ENCODE measurements at regions of chr5 and their contacts with region 1.

Region 1: DNA sequence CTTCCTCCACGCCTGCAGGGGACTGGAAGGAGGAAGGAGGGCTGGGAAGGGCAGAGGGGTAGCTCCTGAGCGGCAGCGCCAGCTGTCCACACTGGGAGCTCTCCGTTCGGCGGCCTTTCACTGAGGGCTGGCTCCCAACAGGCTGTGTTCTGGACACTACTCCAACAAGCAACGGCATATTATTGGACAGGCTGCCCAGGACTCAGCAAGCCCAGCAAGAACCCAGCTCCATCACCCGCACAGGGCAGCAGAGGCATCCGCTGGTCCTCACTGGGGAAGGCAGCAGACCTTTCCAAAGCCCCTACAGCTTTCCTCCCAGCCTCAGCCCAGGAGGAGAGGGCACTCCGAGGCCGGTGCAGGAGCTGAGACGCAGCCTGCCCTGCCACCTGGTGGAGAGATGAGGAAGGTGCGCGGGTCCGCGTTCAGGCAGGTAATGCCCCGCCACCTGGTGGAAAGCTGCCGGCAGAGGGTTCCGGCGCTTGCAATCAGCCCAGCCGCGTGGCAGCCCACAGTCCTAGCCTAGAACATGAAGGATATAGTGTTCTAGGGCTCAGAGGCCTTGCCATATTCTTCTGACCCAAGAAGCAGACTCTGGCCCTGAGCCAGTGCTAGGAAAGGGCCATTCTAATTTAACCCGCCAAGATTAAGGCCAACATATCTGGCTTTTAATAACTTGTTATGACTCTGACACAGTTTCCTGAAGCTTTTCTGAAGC is 74.4 kb downstream of the NRG2 start:
- DNase-seq: peak; percentile 77 to 82 (median 79)
- H3K4me3 ChIP-seq: no peak overlapping the region
- H3K4me3 Mint-ChIP-seq: no peak overlapping the region
- H3K27ac ChIP-seq: no peak overlapping the region
- H3K27ac Mint-ChIP-seq: peak overlapping the region in 1 of 7 donors; percentile 47
- H3K4me1 ChIP-seq: no peaks in the 10 kb centered on the region
- H3K4me1 Mint-ChIP-seq: no peaks in the 10 kb centered on the region
- H3K27me3 ChIP-seq: no peaks in the 10 kb centered on the region
- H3K27me3 Mint-ChIP-seq: peaks cover 5 to 11% of the 10 kb centered on the region in 2 donors

Region 2: DNA sequence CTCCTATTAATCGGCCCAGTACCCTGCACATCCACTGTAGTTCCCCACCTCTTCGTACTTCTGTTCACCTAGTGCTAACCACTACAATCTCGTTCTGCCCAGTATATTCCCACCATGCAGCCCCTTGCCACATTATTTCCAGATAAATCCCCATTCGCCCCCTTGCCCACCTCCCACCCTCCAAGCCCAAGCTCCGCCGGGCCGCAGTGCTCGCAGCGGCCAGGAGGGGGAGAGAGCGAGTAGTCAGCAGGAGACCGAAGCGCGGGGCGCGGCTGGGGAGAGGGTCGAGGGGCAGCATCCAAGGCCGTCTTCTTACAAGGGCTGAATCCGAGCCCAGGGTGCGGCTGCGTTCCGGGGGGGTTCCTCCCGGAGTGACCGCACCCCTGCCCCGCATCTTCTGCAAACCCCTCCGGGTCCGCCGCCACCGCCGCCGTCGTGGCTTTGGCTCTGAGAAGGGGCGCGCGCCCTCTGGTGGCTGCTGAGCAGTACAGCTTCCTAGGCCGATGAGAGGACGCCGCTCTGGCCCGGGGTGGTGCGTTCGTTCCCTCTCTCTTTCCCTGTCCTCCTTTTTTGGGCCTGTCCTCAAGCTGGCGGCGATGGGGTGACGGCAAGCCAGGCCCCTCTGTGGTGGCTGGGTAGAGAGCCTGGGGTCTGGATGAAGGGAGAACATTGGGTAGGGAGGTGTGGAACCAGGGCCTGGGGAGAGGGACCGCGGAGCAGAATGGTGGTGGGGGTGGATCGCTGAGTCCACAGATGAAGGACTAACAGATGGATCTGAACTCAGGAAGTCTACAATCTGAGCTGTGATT is 203.1 kb before region 1 on chr5:
- CTCF ChIA-PET with region 1: interaction called, 15 read pairs
- POLR2A ChIA-PET with region 1: interaction called, 3 read pairs
- intact Hi-C with region 1: no loop called
- DNase-seq: peak; percentile 78 to 87 (median 84)
- H3K4me3 ChIP-seq: peak overlapping the region; percentile 23 to 56
- H3K4me3 Mint-ChIP-seq: peak overlapping the region; percentile 25 to 72 (median 54)
- H3K27ac ChIP-seq: no peak overlapping the region
- H3K27ac Mint-ChIP-seq: peak overlapping the region in 5 of 7 donors; percentile 31 to 66 (median 52)
- H3K4me1 ChIP-seq: peaks cover 9% of the 10 kb centered on the region
- H3K4me1 Mint-ChIP-seq: peaks cover 5 to 8% (median 7%) of the 10 kb centered on the region in 4 donors
- H3K27me3 ChIP-seq: peaks cover 19% of the 10 kb centered on the region
- H3K27me3 Mint-ChIP-seq: peaks cover 19 to 33% of the 10 kb centered on the region in 2 donors

Region 3: GRCh38 chr5:139787568-139788293 is 181.0 kb before region 1 on chr5:
- CTCF ChIA-PET with region 1: interaction called, 147 read pairs
- POLR2A ChIA-PET with region 1: interaction called, 5 read pairs
- intact Hi-C with region 1: loop called (anchors 1 kb)
- DNase-seq: peak; percentile 66 to 86 (median 80)
- H3K4me3 ChIP-seq: peak overlapping the region; percentile 73 to 87
- H3K4me3 Mint-ChIP-seq: peak overlapping the region; percentile 80 to 90 (median 88)
- H3K27ac ChIP-seq: no peak overlapping the region
- H3K27ac Mint-ChIP-seq: peak overlapping the region in 4 of 7 donors; percentile 12 to 71 (median 41)
- H3K4me1 ChIP-seq: peaks cover 10% of the 10 kb centered on the region
- H3K4me1 Mint-ChIP-seq: peaks cover 0 to 14% (median 5%) of the 10 kb centered on the region in 4 donors
- H3K27me3 ChIP-seq: no peaks in the 10 kb centered on the region
- H3K27me3 Mint-ChIP-seq: peaks cover 16 to 17% of the 10 kb centered on the region in 2 donors

Region 4: GRCh38 chr5:139949710-139950109 is 19.0 kb before region 1 on chr5:
- CTCF ChIA-PET with region 1: interaction called, 43 read pairs
- POLR2A ChIA-PET with region 1: interaction called, 3 read pairs
- intact Hi-C with region 1: no loop called
- DNase-seq: no peak
- H3K4me3 ChIP-seq: no peak overlapping the region
- H3K4me3 Mint-ChIP-seq: no peak overlapping the region
- H3K27ac ChIP-seq: no peak overlapping the region
- H3K27ac Mint-ChIP-seq: no peak overlapping the region
- H3K4me1 ChIP-seq: no peaks in the 10 kb centered on the region
- H3K4me1 Mint-ChIP-seq: peaks cover 0 to 3% (median 0%) of the 10 kb centered on the region in 4 donors
- H3K27me3 ChIP-seq: peaks cover 3% of the 10 kb centered on the region
- H3K27me3 Mint-ChIP-seq: peaks cover 26 to 41% of the 10 kb centered on the region in 2 donors

Region 5: DNA sequence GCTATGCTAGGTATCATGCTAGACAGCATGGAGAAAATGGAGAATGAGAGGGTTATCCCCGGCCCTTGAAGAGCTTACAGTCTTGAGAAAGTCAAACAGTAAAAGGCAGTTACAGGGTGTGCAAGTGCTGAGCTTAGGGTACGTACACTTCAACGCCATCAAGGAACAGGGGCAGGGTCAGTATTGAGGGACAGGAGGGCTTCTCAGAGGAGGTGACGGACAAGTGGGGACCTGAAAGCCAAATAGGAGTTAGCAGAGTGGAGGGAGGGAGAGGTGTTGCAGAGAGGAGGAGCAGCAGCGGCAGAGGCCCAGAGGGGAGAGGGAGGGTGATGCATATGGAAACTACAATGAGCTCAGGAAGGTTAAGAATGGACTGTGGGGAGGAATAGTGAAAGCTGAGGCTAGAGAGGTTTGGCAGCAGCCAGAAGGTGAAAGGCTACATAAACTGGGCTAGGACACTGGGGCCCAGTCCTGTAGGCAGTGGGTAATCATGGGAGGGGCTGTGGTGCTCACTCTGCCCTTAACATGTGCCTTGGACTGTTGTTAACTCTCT is 13.6 kb before region 1 on chr5:
- CTCF ChIA-PET with region 1: interaction called, 43 read pairs
- POLR2A ChIA-PET with region 1: no interaction called
- intact Hi-C with region 1: no loop called
- DNase-seq: no peak
- H3K4me3 ChIP-seq: no peak overlapping the region
- H3K4me3 Mint-ChIP-seq: no peak overlapping the region
- H3K27ac ChIP-seq: no peak overlapping the region
- H3K27ac Mint-ChIP-seq: no peak overlapping the region
- H3K4me1 ChIP-seq: no peaks in the 10 kb centered on the region
- H3K4me1 Mint-ChIP-seq: peaks cover 0 to 3% (median 0%) of the 10 kb centered on the region in 4 donors
- H3K27me3 ChIP-seq: no peaks in the 10 kb centered on the region
- H3K27me3 Mint-ChIP-seq: peaks cover 11 to 15% of the 10 kb centered on the region in 2 donors

Region 6: GRCh38 chr5:139985733-139986132 is 17.0 kb after region 1 on chr5:
- CTCF ChIA-PET with region 1: interaction called, 76 read pairs
- POLR2A ChIA-PET with region 1: no interaction called
- intact Hi-C with region 1: no loop called
- DNase-seq: no peak
- H3K4me3 ChIP-seq: no peak overlapping the region
- H3K4me3 Mint-ChIP-seq: no peak overlapping the region
- H3K27ac ChIP-seq: no peak overlapping the region
- H3K27ac Mint-ChIP-seq: no peak overlapping the region
- H3K4me1 ChIP-seq: no peaks in the 10 kb centered on the region
- H3K4me1 Mint-ChIP-seq: no peaks in the 10 kb centered on the region
- H3K27me3 ChIP-seq: no peaks in the 10 kb centered on the region
- H3K27me3 Mint-ChIP-seq: peaks cover 3 to 23% of the 10 kb centered on the region in 2 donors

Region 7: GRCh38 chr5:140060816-140061215 is 92.1 kb after region 1 on chr5:
- CTCF ChIA-PET with region 1: no interaction called
- POLR2A ChIA-PET with region 1: no interaction called
- intact Hi-C with region 1: no loop called
- DNase-seq: no peak
- H3K4me3 ChIP-seq: no peak overlapping the region
- H3K4me3 Mint-ChIP-seq: no peak overlapping the region
- H3K27ac ChIP-seq: no peak overlapping the region
- H3K27ac Mint-ChIP-seq: no peak overlapping the region
- H3K4me1 ChIP-seq: no peaks in the 10 kb centered on the region
- H3K4me1 Mint-ChIP-seq: no peaks in the 10 kb centered on the region
- H3K27me3 ChIP-seq: peaks cover 4% of the 10 kb centered on the region
- H3K27me3 Mint-ChIP-seq: peaks cover 11 to 12% of the 10 kb centered on the region in 2 donors

Region 8: GRCh38 chr5:140157032-140157803 is 188.5 kb after region 1 on chr5:
- CTCF ChIA-PET with region 1: interaction called, 5 read pairs
- POLR2A ChIA-PET with region 1: no interaction called
- intact Hi-C with region 1: loop called (anchors 1 kb)
- DNase-seq: peak; percentile 77 to 82 (median 82)
- H3K4me3 ChIP-seq: no peak overlapping the region
- H3K4me3 Mint-ChIP-seq: peak overlapping the region; percentile 52 to 79 (median 60)
- H3K27ac ChIP-seq: no peak overlapping the region
- H3K27ac Mint-ChIP-seq: peak overlapping the region in 6 of 7 donors; percentile 19 to 88 (median 30)
- H3K4me1 ChIP-seq: peaks cover 11% of the 10 kb centered on the region
- H3K4me1 Mint-ChIP-seq: peaks cover 2 to 15% (median 9%) of the 10 kb centered on the region in 4 donors
- H3K27me3 ChIP-seq: no peaks in the 10 kb centered on the region
- H3K27me3 Mint-ChIP-seq: no peaks in the 10 kb centered on the region

Measured in CD4-positive, alpha-beta memory T cell (primary cell).